Naive thymus-derived CD4-positive, alpha-beta T cell (primary cell): ENCODE measurements at regions of chr3 and their contacts with region 1.

Region 1: DNA sequence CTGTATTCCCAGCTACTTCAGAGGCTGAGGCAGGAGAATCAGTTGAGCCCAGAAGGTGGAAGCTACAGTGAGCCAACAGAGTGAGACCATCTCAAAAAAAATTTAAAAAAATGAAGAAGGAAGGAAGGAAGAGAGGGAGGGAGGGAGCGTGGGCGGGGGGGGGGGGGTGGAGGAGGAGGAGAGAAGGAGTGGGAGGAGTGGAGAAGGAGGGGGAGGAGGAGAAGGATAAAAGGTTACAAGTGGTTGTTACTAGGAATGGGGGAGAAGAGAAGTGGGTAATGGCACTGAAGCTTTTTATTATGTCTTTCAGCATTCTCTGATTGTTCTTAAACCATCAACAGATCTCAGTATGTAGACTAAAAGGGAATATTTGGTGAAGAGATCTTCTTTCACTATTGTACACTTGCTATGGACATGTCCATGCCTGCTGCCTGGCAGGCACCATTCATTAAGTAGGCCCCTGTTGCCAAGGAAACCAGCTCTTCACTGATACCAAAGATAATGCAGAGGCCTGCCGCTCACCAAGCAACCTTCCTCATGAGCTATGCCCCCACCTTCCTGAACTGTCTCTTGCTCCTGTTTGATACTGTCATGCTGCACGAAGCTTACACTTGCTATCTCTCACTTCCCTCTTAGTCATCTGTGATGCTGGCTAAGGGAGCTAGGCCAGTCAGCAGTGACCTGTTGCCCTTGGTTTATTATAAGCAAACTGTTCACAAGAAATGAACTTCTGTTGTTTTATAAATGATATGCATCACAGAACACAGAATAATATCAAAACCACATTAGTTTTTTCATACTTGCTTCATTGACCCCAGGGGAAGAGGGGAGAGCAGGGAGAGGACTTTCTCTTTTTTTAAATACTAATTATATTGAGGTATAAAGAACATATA is 23.1 kb downstream of the EPM2AIP1 start:
- DNase-seq: peak in 5 of 9 donors; percentile 14 to 36 (median 23)
- ATAC-seq: peak; percentile 95
- H3K4me3 ChIP-seq: no peak overlapping the region
- H3K4me3 Mint-ChIP-seq: peak overlapping the region in 6 of 10 donors; percentile 16 to 59 (median 38)
- H3K27ac ChIP-seq: peak overlapping the region; percentile 9
- H3K27ac Mint-ChIP-seq: peak overlapping the region; percentile 48 to 83 (median 63)
- H3K4me1 ChIP-seq: peaks cover 4 to 5% of the 10 kb centered on the region in 2 donors
- H3K4me1 Mint-ChIP-seq: peaks cover 21 to 32% (median 24%) of the 10 kb centered on the region in 7 donors
- H3K27me3 ChIP-seq: no peaks in the 10 kb centered on the region
- H3K27me3 Mint-ChIP-seq: no peaks in the 10 kb centered on the region

Region 2: DNA sequence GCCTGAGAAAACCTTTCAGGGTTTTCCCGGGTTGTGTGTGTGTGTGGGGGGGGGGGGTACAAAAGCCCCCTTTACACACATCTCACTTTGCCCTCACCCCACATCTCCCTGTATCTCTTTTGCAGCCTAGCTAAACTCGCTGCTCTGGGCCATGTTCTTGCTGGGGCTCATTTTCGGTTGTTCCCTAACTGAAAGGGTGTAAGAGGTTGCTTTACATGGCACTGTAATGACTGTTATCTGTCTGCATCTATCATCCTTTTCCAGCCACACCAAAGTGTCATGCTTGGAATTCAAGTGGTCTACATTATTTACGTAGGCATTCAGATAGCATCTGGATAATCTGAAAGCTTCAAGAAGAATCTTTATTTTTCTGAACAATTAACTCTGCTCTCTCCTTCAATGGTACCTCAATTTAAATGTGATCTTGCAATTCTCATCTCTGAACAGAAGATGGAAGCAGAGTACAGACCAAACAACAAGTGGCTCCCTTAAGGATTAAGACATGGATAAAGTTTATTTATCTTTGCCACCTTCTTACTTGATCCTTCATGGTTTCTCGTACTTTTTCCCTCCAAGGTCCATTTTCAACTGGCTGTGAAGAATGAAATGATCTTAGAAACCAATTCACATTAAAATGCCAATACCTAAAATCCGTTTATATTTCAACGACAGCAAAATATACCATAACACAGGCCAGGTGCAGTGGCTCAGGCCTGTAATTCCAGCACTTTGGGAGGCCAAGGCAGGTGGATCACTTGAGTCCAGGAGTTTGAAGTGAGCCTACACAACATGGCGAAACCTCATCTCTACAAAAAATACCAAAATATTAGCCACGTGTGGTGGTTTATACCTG is 240.4 kb before region 1 on chr3:
- CTCF ChIA-PET with region 1: no interaction called
- POLR2A ChIA-PET with region 1: no interaction called
- intact Hi-C with region 1: loop called in 1 of 2 experiments (anchors 5 kb)
- DNase-seq: peak in 4 of 9 donors; percentile 5 to 25 (median 18)
- ATAC-seq: peak; percentile 56
- H3K4me3 ChIP-seq: no peak overlapping the region
- H3K4me3 Mint-ChIP-seq: no peak overlapping the region
- H3K27ac ChIP-seq: no peak overlapping the region
- H3K27ac Mint-ChIP-seq: no peak overlapping the region
- H3K4me1 ChIP-seq: no peaks in the 10 kb centered on the region
- H3K4me1 Mint-ChIP-seq: no peaks in the 10 kb centered on the region
- H3K27me3 ChIP-seq: no peaks in the 10 kb centered on the region
- H3K27me3 Mint-ChIP-seq: peaks cover 0 to 12% (median 7%) of the 10 kb centered on the region in 5 donors

Region 3: DNA sequence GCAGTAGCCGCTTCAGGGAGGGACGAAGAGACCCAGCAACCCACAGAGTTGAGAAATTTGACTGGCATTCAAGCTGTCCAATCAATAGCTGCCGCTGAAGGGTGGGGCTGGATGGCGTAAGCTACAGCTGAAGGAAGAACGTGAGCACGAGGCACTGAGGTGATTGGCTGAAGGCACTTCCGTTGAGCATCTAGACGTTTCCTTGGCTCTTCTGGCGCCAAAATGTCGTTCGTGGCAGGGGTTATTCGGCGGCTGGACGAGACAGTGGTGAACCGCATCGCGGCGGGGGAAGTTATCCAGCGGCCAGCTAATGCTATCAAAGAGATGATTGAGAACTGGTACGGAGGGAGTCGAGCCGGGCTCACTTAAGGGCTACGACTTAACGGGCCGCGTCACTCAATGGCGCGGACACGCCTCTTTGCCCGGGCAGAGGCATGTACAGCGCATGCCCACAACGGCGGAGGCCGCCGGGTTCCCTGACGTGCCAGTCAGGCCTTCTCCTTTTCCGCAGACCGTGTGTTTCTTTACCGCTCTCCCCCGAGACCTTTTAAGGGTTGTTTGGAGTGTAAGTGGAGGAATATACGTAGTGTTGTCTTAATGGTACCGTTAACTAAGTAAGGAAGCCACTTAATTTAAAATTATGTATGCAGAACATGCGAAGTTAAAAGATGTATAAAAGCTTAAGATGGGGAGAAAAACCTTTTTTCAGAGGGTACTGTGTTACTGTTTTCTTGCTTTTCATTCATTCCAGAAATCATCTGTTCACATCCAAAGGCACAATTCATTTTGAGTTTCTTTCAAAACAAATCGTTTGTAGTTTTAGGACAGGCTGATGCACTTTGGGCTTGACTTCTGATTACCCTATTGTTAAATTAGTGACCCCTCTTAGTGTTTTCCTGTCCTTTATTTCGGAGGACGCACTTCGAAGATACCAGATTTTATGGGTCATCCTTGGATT is 23.8 kb after region 1 on chr3 and contains the start of gene MLH1:
- CTCF ChIA-PET with region 1: no interaction called
- POLR2A ChIA-PET with region 1: interaction called, 6 read pairs
- intact Hi-C with region 1: loop called in 1 of 2 experiments (anchors 2 kb)
- DNase-seq: peak; percentile 91 to 100 (median 99)
- ATAC-seq: peak; percentile 90
- H3K4me3 ChIP-seq: peak within 1 kb of the TSS; percentile 80
- H3K4me3 Mint-ChIP-seq: peak within 1 kb of the TSS in 1 of 10 donors; percentile 26
- H3K27ac ChIP-seq: peak within 1 kb of the TSS; percentile 83
- H3K27ac Mint-ChIP-seq: no peak within 1 kb of the TSS
- H3K4me1 ChIP-seq: peaks cover 36 to 40% of the 10 kb centered on the region in 2 donors
- H3K4me1 Mint-ChIP-seq: peaks cover 23 to 43% (median 38%) of the 10 kb centered on the region in 7 donors
- H3K27me3 ChIP-seq: no peaks in the 10 kb centered on the region
- H3K27me3 Mint-ChIP-seq: no peaks in the 10 kb centered on the region
- total RNA-seq, gene MLH1: 26.4 to 42.0 (median 31.7) TPM